Activated T-helper 2 cell treated with anti-CD3 and anti-CD28 coated beads, Interferon-gamma antibody, Interleukin-2, Interleukin-4, amounts not matched to agents 10 μg/mL and 5 μg/mL and 100 μg/mL, durations not matched to agents 14 hours and 24 hours and 36 hours (primary cell): ENCODE measurements at regions of chr6 and their contacts with region 1.

Region 1: GRCh38 chr6:149746147-149746946 is at the start of gene NUP43:
- DNase-seq: peak; percentile 90
- H3K4me3 Mint-ChIP-seq: peak within 1 kb of the TSS; percentile 99
- H3K27ac Mint-ChIP-seq: peak within 1 kb of the TSS; percentile 92
- H3K4me1 Mint-ChIP-seq: peaks cover 25% of the 10 kb centered on the region
- H3K27me3 Mint-ChIP-seq: no peaks in the 10 kb centered on the region
- total RNA-seq, gene NUP43: 70.8 and 80.6 TPM in 2 replicates

Region 2: DNA sequence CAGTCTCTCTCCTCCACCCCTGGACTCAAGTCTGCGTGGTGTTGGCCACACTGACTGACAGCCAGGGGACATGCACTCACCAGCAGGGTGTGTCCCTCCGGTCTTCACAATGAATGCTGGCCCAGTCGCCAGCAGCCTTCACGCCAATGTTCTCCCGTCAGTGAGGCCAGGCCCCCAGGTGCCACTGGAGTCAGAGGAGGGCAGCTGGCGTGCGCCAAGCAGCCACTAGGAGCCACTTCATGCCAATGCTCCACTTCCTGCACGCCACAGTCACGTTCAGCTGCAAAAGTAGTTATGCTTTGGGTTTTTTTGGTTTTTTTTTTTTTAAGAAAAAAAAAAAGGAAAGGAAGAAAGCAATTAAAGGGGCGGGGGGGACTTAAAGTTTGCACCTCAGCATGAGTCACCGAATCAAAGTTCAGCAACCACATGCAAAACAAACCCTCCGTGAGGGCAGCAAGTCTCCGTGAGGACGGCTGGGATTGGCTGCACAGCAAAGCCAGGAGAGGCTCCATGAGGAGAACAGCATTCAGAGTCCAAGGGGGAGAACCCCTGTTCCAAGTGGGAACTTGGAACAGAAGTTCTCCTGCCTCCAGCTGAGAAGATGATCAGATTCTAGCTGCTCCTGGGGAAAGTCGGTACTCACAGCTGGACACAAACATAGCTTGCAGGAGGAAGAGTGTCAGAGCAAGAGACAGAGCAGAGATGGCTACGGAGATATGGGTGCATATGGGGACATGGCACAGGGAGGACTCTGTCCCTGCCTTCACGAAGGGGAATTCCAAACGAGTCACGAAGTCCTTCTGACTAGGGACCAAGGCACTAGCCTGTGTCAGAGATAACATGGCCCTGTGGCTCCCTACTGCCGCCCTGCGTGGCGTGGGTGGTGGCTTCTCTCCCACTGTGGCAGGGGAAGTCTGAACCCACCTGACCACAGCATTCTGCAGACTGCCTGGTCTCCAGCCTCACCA is 261.3 kb before region 1 on chr6 and contains the start of gene ZC3H12D:
- intact Hi-C with region 1: loop called (anchors 5 kb)
- DNase-seq: peak; percentile 70
- H3K4me3 Mint-ChIP-seq: peak within 1 kb of the TSS; percentile 79
- H3K27ac Mint-ChIP-seq: peak within 1 kb of the TSS; percentile 99
- H3K4me1 Mint-ChIP-seq: peaks cover 53% of the 10 kb centered on the region
- H3K27me3 Mint-ChIP-seq: no peaks in the 10 kb centered on the region
- total RNA-seq, gene ZC3H12D: 15.0 and 15.6 TPM in 2 replicates

Region 3: DNA sequence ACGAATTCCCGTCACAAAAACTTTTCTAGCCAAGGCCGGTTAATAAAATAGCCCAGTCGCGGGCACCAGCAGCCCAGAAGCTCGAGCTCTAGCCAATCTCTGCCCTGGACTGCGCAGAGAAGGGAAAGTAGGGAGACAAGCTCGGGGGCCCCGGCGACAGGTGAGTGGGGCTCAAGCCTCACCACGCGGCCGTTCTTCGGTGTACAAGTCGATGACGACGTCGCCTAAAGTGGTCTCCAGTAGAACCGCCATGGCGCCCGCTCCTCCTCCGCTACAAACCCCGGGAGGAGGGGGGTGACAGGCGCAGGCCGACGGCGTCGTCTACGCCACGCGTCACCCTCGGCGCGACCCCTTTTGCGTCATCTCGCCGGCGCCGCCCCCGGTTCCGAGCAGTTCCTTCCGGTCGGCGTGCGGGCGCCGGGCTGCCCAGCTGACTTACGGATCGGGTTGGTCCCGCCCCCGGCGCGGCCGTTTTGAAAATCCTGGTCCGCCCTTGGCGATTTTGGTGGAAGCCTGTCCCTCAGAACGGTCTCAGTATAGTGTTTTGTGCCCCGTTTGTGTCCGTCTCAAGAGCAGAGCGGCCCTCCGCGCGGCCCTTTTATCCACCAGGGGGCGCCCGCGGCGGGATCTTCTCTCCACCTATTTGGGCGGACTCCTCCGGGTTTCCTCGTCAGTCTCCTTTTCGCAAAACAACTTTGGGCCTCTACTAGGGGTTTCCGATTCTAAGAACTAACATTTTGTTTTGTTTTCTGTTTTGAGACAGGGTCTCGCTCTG is 200.4 kb before region 1 on chr6 and contains the start of gene PPIL4:
- intact Hi-C with region 1: loop called (anchors 1 kb)
- DNase-seq: peak; percentile 95
- H3K4me3 Mint-ChIP-seq: peak within 1 kb of the TSS; percentile 96
- H3K27ac Mint-ChIP-seq: peak within 1 kb of the TSS; percentile 97
- H3K4me1 Mint-ChIP-seq: peaks cover 36% of the 10 kb centered on the region
- H3K27me3 Mint-ChIP-seq: peaks cover 6% of the 10 kb centered on the region
- total RNA-seq, gene PPIL4: 20.4 and 20.5 TPM in 2 replicates

Region 4: DNA sequence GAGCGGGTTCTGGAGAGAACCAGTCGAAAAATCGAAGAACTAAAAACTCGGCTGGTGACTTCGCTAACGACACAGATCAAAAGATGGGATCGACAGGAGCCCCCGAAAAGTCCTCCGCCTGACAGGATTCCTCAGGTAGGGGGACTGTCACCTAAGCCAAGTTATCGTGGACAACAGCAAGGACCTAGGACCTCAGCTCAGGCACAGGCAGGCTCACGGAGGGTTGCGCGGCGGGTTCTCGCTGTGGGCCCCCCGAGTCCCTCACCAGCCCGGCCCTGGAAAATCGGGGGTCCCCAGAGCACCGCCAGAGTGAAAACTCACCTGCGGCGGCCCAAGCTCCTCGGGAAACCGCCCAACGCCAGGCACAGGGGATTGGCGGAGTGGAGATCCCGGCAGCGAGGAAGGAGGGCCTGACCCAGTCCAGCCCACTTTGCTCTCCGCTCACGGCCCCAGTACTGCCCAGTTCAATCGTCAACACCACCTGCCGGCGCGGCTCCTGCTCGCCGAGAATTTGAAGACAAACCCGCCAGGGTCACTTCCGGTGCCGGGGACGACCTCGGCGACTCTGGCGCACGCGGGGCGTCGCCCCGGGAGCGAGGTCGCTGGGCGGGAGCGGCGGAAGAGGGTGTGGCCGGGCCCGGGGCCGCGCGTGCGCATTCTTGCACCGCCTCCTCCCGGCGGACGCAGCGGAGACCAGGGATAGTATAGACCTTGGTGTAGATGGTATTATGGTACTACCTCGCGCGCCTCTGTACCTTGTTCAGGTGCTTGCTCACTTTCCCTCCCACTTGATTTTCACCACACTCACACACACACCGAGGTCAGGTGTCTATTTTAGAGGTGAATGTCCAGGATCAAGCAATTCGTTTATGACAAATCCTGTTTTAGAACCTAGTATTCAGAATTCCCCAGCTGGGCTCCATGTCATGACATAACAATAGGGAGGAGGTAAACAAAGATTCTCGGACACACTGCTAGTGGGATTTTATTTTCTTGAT is 97.9 kb before region 1 on chr6 and contains the start of gene KATNA1:
- intact Hi-C with region 1: loop called (anchors 1 kb)
- DNase-seq: peak; percentile 87
- H3K4me3 Mint-ChIP-seq: peak within 1 kb of the TSS; percentile 91
- H3K27ac Mint-ChIP-seq: peak within 1 kb of the TSS; percentile 81
- H3K4me1 Mint-ChIP-seq: peaks cover 24% of the 10 kb centered on the region
- H3K27me3 Mint-ChIP-seq: no peaks in the 10 kb centered on the region
- total RNA-seq, gene KATNA1: 18.9 and 20.8 TPM in 2 replicates

Region 5: GRCh38 chr6:149717588-149718458 is 28.5 kb before region 1 on chr6 and contains the start of gene LATS1:
- intact Hi-C with region 1: loop called (anchors 2 kb)
- DNase-seq: peak; percentile 88
- H3K4me3 Mint-ChIP-seq: peak within 1 kb of the TSS; percentile 96
- H3K27ac Mint-ChIP-seq: peak within 1 kb of the TSS; percentile 97
- H3K4me1 Mint-ChIP-seq: peaks cover 31% of the 10 kb centered on the region
- H3K27me3 Mint-ChIP-seq: no peaks in the 10 kb centered on the region
- total RNA-seq, gene LATS1: 27.8 and 28.4 TPM in 2 replicates

Region 6: DNA sequence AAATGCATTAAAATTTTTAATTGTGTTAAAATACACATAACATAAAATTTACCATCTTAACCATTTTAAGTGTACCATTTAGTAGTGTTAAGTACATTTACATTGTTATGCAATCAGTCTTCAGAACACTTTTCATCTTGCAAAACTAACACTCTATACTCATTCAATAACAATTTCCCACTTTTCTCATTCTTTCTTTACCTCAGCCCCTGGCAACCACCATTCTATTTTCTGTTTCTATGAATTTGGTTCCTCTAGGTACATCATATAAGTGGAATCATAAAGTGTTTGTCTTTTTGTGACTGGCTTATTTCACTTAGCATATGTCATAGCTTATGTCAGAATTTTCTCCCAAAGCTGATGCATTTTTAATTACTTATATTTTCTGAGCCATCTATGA is 35.4 kb after region 1 on chr6:
- intact Hi-C with region 1: loop called (anchors 5 kb)
- DNase-seq: no peak
- H3K4me3 Mint-ChIP-seq: no peak overlapping the region
- H3K27ac Mint-ChIP-seq: no peak overlapping the region
- H3K4me1 Mint-ChIP-seq: no peaks in the 10 kb centered on the region
- H3K27me3 Mint-ChIP-seq: no peaks in the 10 kb centered on the region